BJ (cell line): ENCODE measurements at regions of chr17 and their contacts with region 1.

Region 1: DNA sequence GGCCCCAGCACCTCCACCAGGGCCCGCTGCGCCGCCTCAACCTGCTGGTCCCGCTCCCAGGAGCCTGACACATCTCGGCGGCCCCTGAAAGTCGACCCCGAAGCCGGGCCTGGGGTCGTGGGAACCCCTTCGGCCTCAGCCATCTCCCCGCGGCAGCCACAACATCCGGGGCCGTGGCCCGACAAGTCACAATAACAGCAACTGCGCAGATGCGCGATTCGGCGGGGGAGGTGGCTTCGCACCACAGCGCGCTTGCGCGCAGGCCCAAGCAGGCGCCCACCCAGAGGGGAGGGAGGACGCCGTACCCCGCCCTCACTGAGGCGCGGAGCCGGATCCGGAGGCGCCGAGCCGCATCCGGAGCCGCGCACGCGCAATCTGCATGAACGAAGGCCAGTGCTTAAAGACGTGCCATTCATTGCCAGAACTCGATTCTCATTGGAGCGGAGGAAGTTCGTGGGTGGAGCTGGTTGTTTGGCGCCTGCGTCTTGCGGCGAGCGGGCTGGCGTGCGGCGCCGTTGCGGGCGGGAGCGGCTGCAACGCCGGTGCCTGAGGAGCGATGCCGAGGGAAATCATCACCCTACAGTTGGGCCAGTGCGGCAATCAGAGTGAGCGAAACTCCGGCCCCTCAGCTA is at the starts of genes RETREG3 and TUBG1:
- DNase-seq: peak; percentile 97
- H3K4me3 ChIP-seq: peak within 1 kb of the TSS; percentile 69
- H3K27me3 ChIP-seq: no peaks in the 10 kb centered on the region
- CTCF ChIP-seq: peak; percentile 55
- polyA plus RNA-seq, gene RETREG3: 28.4 and 54.4 TPM in 2 replicates
- polyA plus RNA-seq, gene TUBG1: 37.2 and 66.1 TPM in 2 replicates

Region 2: GRCh38 chr17:42536048-42536371 is 73.3 kb before region 1 on chr17 and contains the start of gene NAGLU:
- CTCF ChIA-PET with region 1: no interaction called
- POLR2A ChIA-PET with region 1: interaction called, 14 read pairs
- DNase-seq: no peak
- H3K4me3 ChIP-seq: peak within 1 kb of the TSS; percentile 48
- H3K27me3 ChIP-seq: no peaks in the 10 kb centered on the region
- CTCF ChIP-seq: no peak
- polyA plus RNA-seq, gene NAGLU: 16.3 and 45.3 TPM in 2 replicates

Region 3: GRCh38 chr17:42677008-42677857 is 67.9 kb after region 1 on chr17:
- CTCF ChIA-PET with region 1: interaction called, 16 read pairs
- POLR2A ChIA-PET with region 1: no interaction called
- DNase-seq: peak; percentile 95
- H3K4me3 ChIP-seq: peak overlapping the region; percentile 83
- H3K27me3 ChIP-seq: no peaks in the 10 kb centered on the region
- CTCF ChIP-seq: no peak